CD4-positive, alpha-beta memory T cell (primary cell): ENCODE measurements at regions of chr6 and their contacts with region 1.

Region 1: GRCh38 chr6:88780714-88781389 is 182.6 kb downstream of the RNGTT start:
- DNase-seq: peak; percentile 51 to 63 (median 54)
- H3K4me3 ChIP-seq: no peak overlapping the region
- H3K4me3 Mint-ChIP-seq: no peak overlapping the region
- H3K27ac ChIP-seq: no peak overlapping the region
- H3K27ac Mint-ChIP-seq: no peak overlapping the region
- H3K4me1 ChIP-seq: no peaks in the 10 kb centered on the region
- H3K4me1 Mint-ChIP-seq: peaks cover 0 to 5% (median 4%) of the 10 kb centered on the region in 4 donors
- H3K27me3 ChIP-seq: no peaks in the 10 kb centered on the region
- H3K27me3 Mint-ChIP-seq: no peaks in the 10 kb centered on the region

Region 2: DNA sequence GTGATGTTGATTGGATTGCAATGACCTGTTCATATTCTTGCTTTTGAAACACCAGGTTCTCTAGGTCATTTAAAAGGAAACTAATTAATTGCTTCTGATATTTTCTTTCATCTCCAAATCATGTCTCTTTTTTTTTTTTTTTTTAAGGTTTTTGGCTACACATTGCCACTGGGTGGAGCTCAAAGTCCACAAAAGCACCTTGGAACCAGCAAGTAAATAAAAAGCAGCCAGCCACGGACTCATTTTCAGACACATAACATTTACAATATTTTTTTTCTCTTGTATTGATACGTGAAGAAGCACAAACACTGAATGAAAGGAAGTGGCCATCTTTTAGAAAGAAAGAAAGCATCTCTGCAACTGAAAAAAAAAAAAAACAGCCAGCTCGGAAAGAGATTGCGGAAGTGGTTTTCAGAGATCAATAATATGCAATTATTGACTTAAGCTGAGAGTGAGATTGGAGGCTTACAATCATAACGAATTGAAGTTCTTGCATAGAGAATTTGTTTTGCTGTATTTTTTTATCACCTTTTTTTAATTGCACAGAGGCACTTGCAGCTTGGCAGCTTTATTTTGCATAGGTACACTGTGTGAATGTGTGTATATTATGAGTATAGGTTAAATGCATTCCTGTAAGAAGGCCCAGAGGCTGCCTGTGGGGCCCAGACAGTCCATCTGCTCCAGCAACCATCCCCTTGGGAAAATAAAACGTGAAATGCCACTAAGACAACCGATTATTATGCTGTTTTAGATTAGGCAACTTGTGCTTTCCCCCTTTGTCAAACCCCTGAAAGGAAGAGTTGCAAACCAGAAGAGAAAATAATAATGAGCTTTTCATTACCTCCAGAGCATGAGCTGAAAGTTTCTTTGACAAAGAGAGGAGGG is 1714.2 kb before region 1 on chr6:
- CTCF ChIA-PET with region 1: interaction called, 3 read pairs
- POLR2A ChIA-PET with region 1: no interaction called
- intact Hi-C with region 1: loop called (anchors 10 kb)
- DNase-seq: peak in 4 of 5 donors; percentile 24 to 40 (median 34)
- H3K4me3 ChIP-seq: no peak overlapping the region
- H3K4me3 Mint-ChIP-seq: peak overlapping the region in 4 of 8 donors; percentile 19 to 51 (median 44)
- H3K27ac ChIP-seq: no peak overlapping the region
- H3K27ac Mint-ChIP-seq: peak overlapping the region in 2 of 7 donors; percentile 26 to 43
- H3K4me1 ChIP-seq: no peaks in the 10 kb centered on the region
- H3K4me1 Mint-ChIP-seq: no peaks in the 10 kb centered on the region
- H3K27me3 ChIP-seq: no peaks in the 10 kb centered on the region
- H3K27me3 Mint-ChIP-seq: peaks cover 1 to 12% of the 10 kb centered on the region in 2 donors

Region 3: DNA sequence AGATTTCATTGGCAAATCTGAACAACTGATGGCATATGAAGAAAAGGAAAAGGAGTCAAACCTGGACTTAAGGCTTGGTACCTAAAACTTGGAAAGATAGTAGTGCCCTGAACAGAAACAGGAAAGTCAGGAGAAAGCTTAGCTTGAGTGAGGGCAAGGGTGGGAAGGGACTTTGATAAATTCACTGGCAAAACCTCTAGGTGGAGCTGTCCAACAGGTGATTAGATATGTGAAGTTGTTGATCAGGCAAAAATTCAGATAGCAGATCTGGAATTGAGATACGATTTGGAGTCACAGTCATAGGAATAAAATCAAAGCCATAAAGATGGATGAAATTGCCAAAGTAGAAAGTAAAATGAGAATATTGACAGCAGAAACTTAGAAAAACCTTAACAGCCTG is 1641.6 kb before region 1 on chr6:
- CTCF ChIA-PET with region 1: interaction called, 3 read pairs
- POLR2A ChIA-PET with region 1: no interaction called
- intact Hi-C with region 1: loop called (anchors 1 kb)
- DNase-seq: peak; percentile 50 to 71 (median 68)
- H3K4me3 ChIP-seq: no peak overlapping the region
- H3K4me3 Mint-ChIP-seq: no peak overlapping the region
- H3K27ac ChIP-seq: no peak overlapping the region
- H3K27ac Mint-ChIP-seq: peak overlapping the region in 1 of 7 donors; percentile 80
- H3K4me1 ChIP-seq: no peaks in the 10 kb centered on the region
- H3K4me1 Mint-ChIP-seq: peaks cover 0 to 4% (median 3%) of the 10 kb centered on the region in 4 donors
- H3K27me3 ChIP-seq: no peaks in the 10 kb centered on the region
- H3K27me3 Mint-ChIP-seq: peaks cover 5 to 6% of the 10 kb centered on the region in 2 donors

Region 4: DNA sequence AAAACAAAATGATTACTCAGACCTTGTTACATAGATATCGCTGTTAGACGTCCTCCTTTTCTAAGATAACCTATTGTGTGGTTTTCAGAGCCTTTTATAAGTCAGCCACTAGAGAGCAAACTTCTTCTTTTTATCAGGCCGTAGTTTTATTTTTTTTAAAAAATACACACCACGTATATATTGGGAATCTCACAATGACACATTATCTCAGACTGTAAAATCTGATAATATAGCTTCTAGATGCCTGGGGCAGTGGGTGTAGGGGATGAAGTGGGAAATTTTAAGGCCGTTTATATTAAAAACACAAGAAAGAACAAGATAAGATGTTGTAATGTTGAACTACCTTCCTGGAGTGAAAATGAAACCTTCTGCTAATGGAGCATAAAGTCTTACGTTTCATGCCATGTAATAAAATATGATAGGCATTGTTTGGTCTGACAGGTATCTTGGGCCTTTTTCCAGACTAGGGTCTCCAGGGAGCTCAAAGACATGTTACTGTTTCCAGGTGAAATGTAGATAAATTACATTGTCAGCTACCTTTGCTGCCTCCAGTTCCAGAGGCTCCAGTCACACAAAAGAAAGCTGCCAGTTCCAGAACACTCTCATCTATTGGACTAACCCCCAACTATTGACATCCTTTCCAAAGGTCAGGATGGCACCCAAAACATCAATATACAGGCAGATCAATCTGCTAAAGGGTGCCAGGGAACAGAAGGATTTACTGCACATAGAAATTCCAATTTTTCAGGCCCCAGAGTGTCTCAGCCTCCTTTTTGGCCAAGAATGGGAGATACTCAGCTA is 948.6 kb before region 1 on chr6:
- CTCF ChIA-PET with region 1: interaction called, 9 read pairs
- POLR2A ChIA-PET with region 1: no interaction called
- intact Hi-C with region 1: loop called (anchors 1 kb)
- DNase-seq: peak in 4 of 5 donors; percentile 37 to 51 (median 44)
- H3K4me3 ChIP-seq: peak overlapping the region in 1 of 2 donors; percentile 46
- H3K4me3 Mint-ChIP-seq: peak overlapping the region; percentile 81 to 95 (median 90)
- H3K27ac ChIP-seq: peak overlapping the region; percentile 44
- H3K27ac Mint-ChIP-seq: peak overlapping the region; percentile 19 to 97 (median 95)
- H3K4me1 ChIP-seq: peaks cover 6% of the 10 kb centered on the region
- H3K4me1 Mint-ChIP-seq: peaks cover 0 to 6% (median 5%) of the 10 kb centered on the region in 4 donors
- H3K27me3 ChIP-seq: no peaks in the 10 kb centered on the region
- H3K27me3 Mint-ChIP-seq: no peaks in the 10 kb centered on the region

Region 5: DNA sequence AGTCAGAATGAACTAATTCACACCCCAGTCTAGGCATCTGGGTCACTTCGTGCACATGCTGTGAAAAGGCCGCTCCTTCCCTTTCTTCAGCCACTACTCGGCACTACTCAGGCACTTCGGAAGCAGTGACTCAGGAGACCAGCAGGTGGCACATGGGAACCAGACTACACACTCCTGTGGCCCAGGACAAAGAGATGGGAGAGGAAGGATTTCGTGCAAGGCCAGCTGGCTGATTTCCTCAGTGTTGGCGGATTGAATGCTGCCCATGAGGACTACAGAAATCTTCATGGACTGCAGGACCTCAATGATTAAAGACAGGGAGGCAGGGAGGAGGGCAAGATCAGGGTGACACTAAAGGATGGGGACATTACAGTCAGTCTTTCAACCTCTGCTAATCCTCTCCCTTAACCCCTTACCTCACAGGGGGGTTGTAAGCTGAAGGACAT is 851.0 kb before region 1 on chr6:
- CTCF ChIA-PET with region 1: interaction called, 29 read pairs
- POLR2A ChIA-PET with region 1: no interaction called
- intact Hi-C with region 1: loop called (anchors 1 kb)
- DNase-seq: peak; percentile 41 to 52 (median 44)
- H3K4me3 ChIP-seq: no peak overlapping the region
- H3K4me3 Mint-ChIP-seq: peak overlapping the region in 1 of 8 donors; percentile 14
- H3K27ac ChIP-seq: no peak overlapping the region
- H3K27ac Mint-ChIP-seq: no peak overlapping the region
- H3K4me1 ChIP-seq: no peaks in the 10 kb centered on the region
- H3K4me1 Mint-ChIP-seq: peaks cover 0 to 7% (median 2%) of the 10 kb centered on the region in 4 donors
- H3K27me3 ChIP-seq: no peaks in the 10 kb centered on the region
- H3K27me3 Mint-ChIP-seq: peaks cover 0 to 2% of the 10 kb centered on the region in 2 donors